MCF 10A (cell line): ENCODE measurements at regions of chr1 and their contacts with region 1.

Region 1: GRCh38 chr1:40161125-40161887 is at the start of gene RLF:
- DNase-seq: peak; percentile 92
- H3K4me3 Mint-ChIP-seq: no peak within 1 kb of the TSS
- H3K27ac Mint-ChIP-seq: no peak within 1 kb of the TSS
- H3K4me1 Mint-ChIP-seq: peaks cover 6% of the 10 kb centered on the region
- H3K27me3 Mint-ChIP-seq: no peaks in the 10 kb centered on the region
- CTCF ChIP-seq: no peak
- total RNA-seq, gene RLF: 8.8 and 11.2 TPM in 2 replicates

Region 2: DNA sequence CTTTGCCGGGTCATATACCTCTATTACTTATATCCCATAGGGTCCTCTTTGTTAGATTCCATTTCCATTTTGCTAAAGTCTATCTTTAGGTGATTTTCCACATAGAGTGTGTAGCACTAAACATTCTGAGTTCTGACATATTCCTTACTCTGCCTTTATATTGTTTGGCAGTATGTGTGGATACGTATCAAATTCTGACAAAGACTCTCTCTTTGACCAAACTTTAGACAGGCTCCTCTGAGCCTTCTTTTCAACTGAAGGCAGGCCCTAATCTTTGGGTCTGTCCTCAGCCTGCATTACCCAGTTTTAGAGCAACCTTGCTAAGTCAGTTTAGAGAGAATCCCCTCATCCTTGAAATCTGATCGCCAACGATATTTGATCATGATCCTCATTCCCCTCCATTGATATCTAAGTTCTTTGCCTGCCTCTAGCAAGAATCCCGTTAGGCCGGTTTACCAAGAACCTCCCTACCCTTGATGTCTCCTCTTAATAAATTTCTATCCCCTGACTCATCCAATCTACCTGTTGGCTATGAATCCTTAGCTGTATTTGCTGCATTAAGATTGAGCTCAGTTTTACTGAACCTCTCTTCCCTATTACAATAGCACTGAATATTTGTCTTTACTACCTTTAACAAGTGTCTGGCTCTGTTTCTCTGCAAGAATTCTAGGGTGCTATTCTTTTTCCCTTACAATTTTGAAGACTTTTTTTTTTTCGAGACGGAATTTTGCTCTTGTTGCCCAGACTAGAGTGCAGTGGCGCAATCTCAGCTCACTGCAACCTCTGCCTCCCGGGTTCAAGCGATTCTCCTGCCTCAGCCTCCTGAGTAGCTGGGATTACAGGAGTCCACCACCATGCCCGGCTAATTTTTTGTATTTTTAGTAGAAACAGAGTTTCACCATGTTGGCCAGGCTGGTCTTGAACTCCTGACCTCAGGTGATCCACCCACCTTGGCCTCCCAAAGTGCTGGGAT is 53.7 kb before region 1 on chr1:
- CTCF ChIA-PET with region 1: no interaction called
- POLR2A ChIA-PET with region 1: no interaction called
- intact Hi-C with region 1: no loop called
- DNase-seq: peak; percentile 2
- H3K4me3 Mint-ChIP-seq: no peak overlapping the region
- H3K27ac Mint-ChIP-seq: no peak overlapping the region
- H3K4me1 Mint-ChIP-seq: no peaks in the 10 kb centered on the region
- H3K27me3 Mint-ChIP-seq: peaks cover 15% of the 10 kb centered on the region
- CTCF ChIP-seq: no peak

Region 3: GRCh38 chr1:40257688-40258444 is 96.6 kb after region 1 on chr1 and contains the start of gene ZMPSTE24:
- CTCF ChIA-PET with region 1: interaction called, 3 read pairs
- POLR2A ChIA-PET with region 1: interaction called, 30 read pairs
- intact Hi-C with region 1: loop called (anchors 5 kb)
- DNase-seq: peak; percentile 98
- H3K4me3 Mint-ChIP-seq: peak within 1 kb of the TSS; percentile 91
- H3K27ac Mint-ChIP-seq: peak within 1 kb of the TSS; percentile 99
- H3K4me1 Mint-ChIP-seq: peaks cover 19% of the 10 kb centered on the region
- H3K27me3 Mint-ChIP-seq: no peaks in the 10 kb centered on the region
- CTCF ChIP-seq: no peak
- total RNA-seq, gene ZMPSTE24: 27.8 and 31.3 TPM in 2 replicates